Transverse colon (tissue), 4 donors: ENCODE measurements at regions of chrX and their contacts with region 1.

Region 1: DNA sequence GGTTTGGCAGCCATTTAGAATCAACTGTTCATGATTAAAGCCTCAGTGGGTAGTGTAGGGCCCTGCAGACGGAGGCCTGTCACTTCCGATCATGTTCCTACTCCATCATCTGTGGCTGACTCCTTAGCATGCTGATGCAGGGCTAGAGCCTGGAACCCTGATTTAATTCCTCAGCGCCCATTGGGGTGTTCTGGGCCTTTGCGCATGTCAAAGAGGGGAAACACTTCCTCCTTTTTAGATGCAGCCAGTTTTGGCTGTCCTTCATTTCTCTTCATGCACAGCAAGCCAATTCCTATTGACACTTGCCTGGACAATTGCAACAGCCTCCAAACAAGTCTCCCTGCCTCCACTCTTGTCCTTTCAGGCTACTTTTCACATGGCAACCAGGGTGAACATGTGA is 51.9 kb upstream of the MAGEA4 start:
- DNase-seq: no peak
- H3K4me3 ChIP-seq: no peak overlapping the region
- H3K27ac ChIP-seq: no peak overlapping the region
- H3K4me1 ChIP-seq: no peaks in the 10 kb centered on the region
- H3K27me3 ChIP-seq: no peaks in the 10 kb centered on the region
- CTCF ChIP-seq: no peak
- EP300 ChIP-seq: no peak
- POLR2A ChIP-seq: no peak

Region 2: GRCh38 chrX:152154050-152154449 is 293.2 kb after region 1 on chrX:
- in situ Hi-C with region 1: no loop called
- intact Hi-C with region 1: no loop called
- DNase-seq: no peak
- H3K4me3 ChIP-seq: no peak overlapping the region
- H3K27ac ChIP-seq: no peak overlapping the region
- H3K4me1 ChIP-seq: no peaks in the 10 kb centered on the region
- H3K27me3 ChIP-seq: no peaks in the 10 kb centered on the region
- CTCF ChIP-seq: no peak
- EP300 ChIP-seq: no peak
- POLR2A ChIP-seq: no peak

Region 3: GRCh38 chrX:152884171-152884570 is 1023.3 kb after region 1 on chrX:
- in situ Hi-C with region 1: no loop called
- intact Hi-C with region 1: loop called (anchors 5 kb)
- DNase-seq: no peak
- H3K4me3 ChIP-seq: no peak overlapping the region
- H3K27ac ChIP-seq: no peak overlapping the region
- H3K4me1 ChIP-seq: no peaks in the 10 kb centered on the region
- H3K27me3 ChIP-seq: no peaks in the 10 kb centered on the region
- CTCF ChIP-seq: no peak
- EP300 ChIP-seq: no peak
- POLR2A ChIP-seq: no peak